IMR-90 (cell line): ENCODE measurements at regions of chr1 and their contacts with region 1.

Region 1: GRCh38 chr1:220776720-220777326 is 9.9 kb upstream of the MTARC1 start:
- DNase-seq: peak; percentile 62
- ATAC-seq: peak; percentile 100
- H3K4me3 ChIP-seq: no peak overlapping the region
- H3K27ac ChIP-seq: no peak overlapping the region
- H3K4me1 ChIP-seq: no peaks in the 10 kb centered on the region
- H3K27me3 ChIP-seq: no peaks in the 10 kb centered on the region
- CTCF ChIP-seq: peak; percentile 91
- POLR2A ChIP-seq: no peak
- RAD21 ChIP-seq: peak; percentile 97

Region 2: DNA sequence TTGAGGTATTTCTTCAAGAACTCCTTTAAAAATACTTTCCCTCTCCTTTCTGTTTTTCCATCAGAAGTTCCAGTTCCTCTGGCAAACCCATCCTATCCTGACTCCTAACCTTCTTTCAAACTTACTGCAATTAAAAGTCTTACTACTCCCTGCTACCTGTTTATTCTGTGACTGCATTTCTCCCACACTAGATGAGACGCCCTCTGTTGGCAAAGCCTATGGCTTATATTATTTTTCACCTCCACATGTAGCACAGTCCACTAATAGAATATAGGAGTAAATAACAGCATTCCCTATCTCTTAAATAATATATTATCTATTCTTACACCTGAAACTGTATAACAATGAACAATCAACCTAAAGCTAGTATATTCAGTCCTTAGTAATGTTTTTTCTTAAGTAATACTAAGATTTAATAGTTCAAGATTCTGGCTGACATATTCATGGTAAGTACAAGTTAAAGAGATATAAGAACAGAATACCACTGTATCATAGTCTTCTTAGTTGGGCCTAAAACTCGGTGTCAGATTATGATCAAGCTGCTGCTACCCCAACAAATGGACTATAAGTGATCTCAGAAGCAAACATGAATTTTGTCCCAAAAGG is 559.3 kb before region 1 on chr1:
- CTCF ChIA-PET with region 1: interaction called, 3 read pairs
- POLR2A ChIA-PET with region 1: no interaction called
- dilution Hi-C with region 1: no loop called
- in situ Hi-C with region 1: no loop called
- intact Hi-C with region 1: loop called (anchors 2 kb)
- DNase-seq: no peak
- ATAC-seq: no peak
- H3K4me3 ChIP-seq: no peak overlapping the region
- H3K27ac ChIP-seq: no peak overlapping the region
- H3K4me1 ChIP-seq: 0 out of 2 replicates have a peak, but pooled peaks cover 2% of the 10 kb centered on the region
- H3K27me3 ChIP-seq: no peaks in the 10 kb centered on the region
- CTCF ChIP-seq: 0 out of 2 replicates have a peak, but pooled peaks have one; percentile 9
- POLR2A ChIP-seq: no peak
- RAD21 ChIP-seq: no peak

Region 3: DNA sequence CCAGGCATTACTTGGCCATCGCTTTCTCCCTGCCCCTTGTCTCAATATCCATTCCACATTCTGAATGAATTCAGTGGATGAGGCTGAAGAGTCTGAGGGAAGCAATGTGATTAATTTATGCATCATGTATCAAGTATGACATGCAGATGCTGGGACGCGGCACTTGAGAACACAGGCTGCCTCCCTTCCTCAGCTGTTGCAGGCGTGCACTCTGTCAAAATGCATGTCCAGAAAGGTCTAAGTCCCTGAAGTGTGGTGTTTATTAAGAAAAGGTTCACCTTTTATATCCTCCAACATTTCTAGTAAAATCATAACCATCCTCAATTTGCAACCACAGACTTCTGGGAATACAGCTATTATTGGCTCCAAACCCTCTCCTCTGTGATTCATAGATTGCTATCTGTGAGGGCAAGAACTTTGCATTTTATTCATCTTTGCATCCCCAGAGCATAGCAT is 481.9 kb before region 1 on chr1:
- CTCF ChIA-PET with region 1: interaction called, 3 read pairs
- POLR2A ChIA-PET with region 1: no interaction called
- dilution Hi-C with region 1: no loop called
- in situ Hi-C with region 1: loop called (anchors 10 kb)
- intact Hi-C with region 1: loop called (anchors 5 kb)
- DNase-seq: no peak
- ATAC-seq: no peak
- H3K4me3 ChIP-seq: no peak overlapping the region
- H3K27ac ChIP-seq: no peak overlapping the region
- H3K4me1 ChIP-seq: no peaks in the 10 kb centered on the region
- H3K27me3 ChIP-seq: peaks cover 8% of the 10 kb centered on the region; the same call in 1 of the 2 replicates
- CTCF ChIP-seq: no peak
- POLR2A ChIP-seq: no peak
- RAD21 ChIP-seq: no peak

Region 4: GRCh38 chr1:220680085-220680687 is 96.6 kb before region 1 on chr1:
- CTCF ChIA-PET with region 1: interaction called, 10 read pairs
- POLR2A ChIA-PET with region 1: no interaction called
- dilution Hi-C with region 1: no loop called
- in situ Hi-C with region 1: loop called (anchors 5 kb)
- intact Hi-C with region 1: loop called (anchors 1 kb)
- DNase-seq: peak; percentile 19
- ATAC-seq: peak; percentile 87
- H3K4me3 ChIP-seq: no peak overlapping the region
- H3K27ac ChIP-seq: no peak overlapping the region
- H3K4me1 ChIP-seq: no peaks in the 10 kb centered on the region
- H3K27me3 ChIP-seq: no peaks in the 10 kb centered on the region
- CTCF ChIP-seq: peak; percentile 61
- POLR2A ChIP-seq: no peak
- RAD21 ChIP-seq: peak; percentile 56

Region 5: DNA sequence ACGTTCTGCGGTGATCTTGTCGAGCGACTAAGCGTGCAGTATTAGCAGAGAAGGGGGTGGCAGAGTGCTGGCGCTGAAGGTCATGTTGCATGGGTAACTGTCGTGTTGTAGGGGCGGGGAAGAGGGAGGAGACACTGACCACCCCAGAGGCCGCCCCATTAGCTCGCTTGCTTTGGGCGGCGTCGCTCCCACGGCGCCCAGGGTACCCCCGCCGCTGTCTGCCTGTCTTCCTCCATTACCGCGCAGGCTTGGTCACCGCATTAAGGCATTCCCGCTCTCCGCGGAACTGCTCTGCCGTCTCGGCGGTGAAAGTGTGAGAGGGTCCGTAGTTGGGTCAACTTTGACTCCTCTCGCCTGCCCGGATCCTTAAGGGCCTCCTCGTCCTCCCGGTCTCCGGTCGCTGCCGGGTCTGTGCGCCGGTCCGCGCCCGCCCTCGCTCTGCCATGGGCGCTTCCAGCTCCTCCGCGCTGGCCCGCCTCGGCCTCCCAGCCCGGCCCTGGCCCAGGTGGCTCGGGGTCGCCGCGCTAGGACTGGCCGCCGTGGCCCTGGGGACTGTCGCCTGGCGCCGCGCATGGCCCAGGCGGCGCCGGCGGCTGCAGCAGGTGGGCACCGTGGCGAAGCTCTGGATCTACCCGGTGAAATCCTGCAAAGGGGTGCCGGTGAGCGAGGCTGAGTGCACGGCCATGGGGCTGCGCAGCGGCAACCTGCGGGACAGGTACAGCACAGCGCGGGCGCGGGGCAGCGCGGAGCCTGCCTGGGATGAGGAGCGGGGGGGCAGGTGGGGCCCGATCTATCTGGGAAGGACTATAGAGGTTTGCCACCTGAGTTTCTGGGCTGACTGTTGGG is 28.5 kb before region 1 on chr1 and contains the start of gene MTARC2:
- CTCF ChIA-PET with region 1: interaction called, 19 read pairs
- POLR2A ChIA-PET with region 1: no interaction called
- dilution Hi-C with region 1: no loop called
- in situ Hi-C with region 1: no loop called
- intact Hi-C with region 1: no loop called
- DNase-seq: peak; percentile 49
- ATAC-seq: peak; percentile 96
- H3K4me3 ChIP-seq: peak within 1 kb of the TSS; percentile 54
- H3K27ac ChIP-seq: peak within 1 kb of the TSS; percentile 1; the same call in 1 of the 2 replicates
- H3K4me1 ChIP-seq: no peaks in the 10 kb centered on the region
- H3K27me3 ChIP-seq: peaks cover under 1% of the 10 kb centered on the region; the same call in 1 of the 2 replicates
- CTCF ChIP-seq: no peak
- POLR2A ChIP-seq: no peak
- RAD21 ChIP-seq: no peak
- total RNA-seq, gene MTARC2: 0.36 and 0.56 TPM in 2 replicates